WTC11 (cell line): ENCODE measurements at regions of chr3 and their contacts with region 1.

Region 1: DNA sequence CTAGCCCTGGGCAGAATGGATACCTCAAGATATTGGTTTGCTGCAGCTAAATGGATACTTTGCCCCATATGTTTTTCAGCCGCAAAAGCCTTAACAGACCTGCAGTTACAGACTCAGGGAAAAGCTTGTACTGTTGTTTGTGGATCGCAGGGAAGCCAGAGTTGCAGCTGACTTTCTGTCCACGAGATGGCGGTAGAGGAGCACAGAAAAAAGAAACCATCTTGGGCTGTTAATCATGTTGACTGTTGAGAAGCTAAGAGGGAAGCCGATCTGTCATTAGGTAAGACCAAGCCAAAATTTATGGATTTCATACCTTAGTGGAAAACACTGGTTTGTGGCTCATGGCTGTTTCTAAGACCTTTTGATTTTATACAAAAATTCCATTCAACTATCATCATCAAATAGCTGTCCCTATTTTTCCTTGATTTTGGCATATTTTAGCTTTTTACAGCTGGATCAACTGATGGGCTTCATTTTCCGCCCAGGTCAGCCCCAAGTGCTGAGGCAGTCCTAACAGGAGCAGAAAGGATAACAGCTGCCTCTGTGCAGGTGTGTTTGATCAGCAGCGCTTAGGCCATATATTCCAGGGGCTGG is 205.7 kb upstream of the ZPLD1 start:
- DNase-seq: peak; percentile 80
- ATAC-seq: peak; percentile 86
- H3K4me3 Mint-ChIP-seq: no peak overlapping the region
- H3K27ac Mint-ChIP-seq: no peak overlapping the region
- H3K4me1 Mint-ChIP-seq: peaks cover 10% of the 10 kb centered on the region; the same call in 1 of the 2 replicates
- H3K27me3 Mint-ChIP-seq: no peaks in the 10 kb centered on the region
- CTCF ChIP-seq: peak; percentile 72

Region 2: DNA sequence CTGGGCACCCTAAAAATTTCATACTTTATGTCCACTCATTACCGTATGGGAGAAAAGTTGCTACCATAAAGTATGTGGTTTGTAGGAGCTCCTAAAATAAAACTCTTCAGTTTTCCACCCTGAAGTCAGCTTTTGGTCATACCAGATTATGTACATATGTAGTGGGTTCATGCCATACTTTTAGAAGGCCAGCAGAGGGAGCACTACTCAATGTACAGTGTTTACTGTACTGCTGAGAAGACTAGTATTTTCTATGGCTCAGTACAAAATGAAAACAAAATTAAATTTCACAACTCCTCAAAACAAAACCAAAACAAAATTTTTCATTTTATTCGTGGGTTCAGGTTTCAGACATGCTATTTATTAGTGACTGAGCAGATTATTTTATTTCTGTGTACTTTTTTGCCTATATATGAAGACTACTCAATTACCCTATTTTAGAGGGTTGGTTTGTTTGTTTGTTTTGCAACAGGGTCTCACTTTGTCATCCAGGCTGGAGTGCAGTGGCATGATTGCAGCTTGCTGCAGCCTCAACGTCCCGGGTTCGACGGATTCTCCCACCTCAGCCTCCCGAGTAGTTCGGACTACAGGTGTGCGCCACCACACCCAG is 425.9 kb before region 1 on chr3:
- CTCF ChIA-PET with region 1: interaction called, 33 read pairs
- POLR2A ChIA-PET with region 1: interaction called, 3 read pairs
- DNase-seq: no peak
- ATAC-seq: peak; percentile 73
- H3K4me3 Mint-ChIP-seq: no peak overlapping the region
- H3K27ac Mint-ChIP-seq: no peak overlapping the region
- H3K4me1 Mint-ChIP-seq: peaks cover 13% of the 10 kb centered on the region
- H3K27me3 Mint-ChIP-seq: no peaks in the 10 kb centered on the region
- CTCF ChIP-seq: peak; percentile 78

Region 3: DNA sequence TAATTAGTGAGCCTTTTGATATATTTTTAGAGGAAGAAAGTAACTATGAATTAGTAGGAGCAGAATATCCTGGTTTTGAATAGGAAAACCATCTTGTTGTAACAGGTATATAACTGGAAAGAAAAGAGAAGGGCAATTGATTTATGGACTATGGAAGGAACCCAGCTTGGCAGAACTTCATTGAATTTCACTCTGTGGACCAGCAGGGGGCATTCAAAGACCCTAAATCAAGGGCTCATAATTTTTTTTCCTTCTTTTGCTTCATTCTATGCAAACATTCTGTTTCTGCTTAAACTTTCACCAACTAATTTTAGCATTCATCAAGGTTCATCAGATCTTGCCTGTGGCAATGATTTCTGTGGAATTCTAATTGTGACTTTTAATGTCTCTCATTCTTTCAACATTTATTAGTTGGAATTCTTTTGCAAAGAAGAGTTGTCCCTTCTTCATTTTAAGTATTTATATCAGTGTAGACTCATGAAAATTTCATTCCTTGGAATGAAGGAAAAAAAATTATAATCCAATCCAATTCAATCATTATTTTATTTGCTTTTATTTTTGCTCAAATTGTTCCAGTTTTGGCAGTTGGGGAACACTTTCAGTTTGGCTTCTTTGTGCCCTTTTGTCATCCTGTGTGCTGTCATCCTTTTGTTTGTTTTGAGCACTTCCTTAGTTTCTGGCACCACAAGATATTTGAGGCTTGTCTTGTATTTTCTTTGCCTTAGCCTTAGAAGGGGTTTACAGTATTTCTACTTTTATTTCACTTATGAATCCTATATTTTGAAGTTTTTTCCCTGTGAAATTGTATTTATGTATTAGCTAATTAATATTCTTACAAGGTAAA is 419.8 kb before region 1 on chr3:
- CTCF ChIA-PET with region 1: interaction called, 33 read pairs
- POLR2A ChIA-PET with region 1: interaction called, 3 read pairs
- DNase-seq: no peak
- ATAC-seq: no peak
- H3K4me3 Mint-ChIP-seq: no peak overlapping the region
- H3K27ac Mint-ChIP-seq: peak overlapping the region; percentile 36; the same call in 1 of the 2 replicates
- H3K4me1 Mint-ChIP-seq: peaks cover 15% of the 10 kb centered on the region
- H3K27me3 Mint-ChIP-seq: no peaks in the 10 kb centered on the region
- CTCF ChIP-seq: peak; percentile 36; the same call in 1 of the 2 replicates

Region 4: GRCh38 chr3:101827211-101828174 is 401.7 kb before region 1 on chr3:
- CTCF ChIA-PET with region 1: interaction called, 10 read pairs
- POLR2A ChIA-PET with region 1: no interaction called
- DNase-seq: peak; percentile 54
- ATAC-seq: peak; percentile 90
- H3K4me3 Mint-ChIP-seq: peak overlapping the region; percentile 82
- H3K27ac Mint-ChIP-seq: peak overlapping the region; percentile 80
- H3K4me1 Mint-ChIP-seq: peaks cover 23% of the 10 kb centered on the region
- H3K27me3 Mint-ChIP-seq: no peaks in the 10 kb centered on the region
- CTCF ChIP-seq: no peak

Region 5: DNA sequence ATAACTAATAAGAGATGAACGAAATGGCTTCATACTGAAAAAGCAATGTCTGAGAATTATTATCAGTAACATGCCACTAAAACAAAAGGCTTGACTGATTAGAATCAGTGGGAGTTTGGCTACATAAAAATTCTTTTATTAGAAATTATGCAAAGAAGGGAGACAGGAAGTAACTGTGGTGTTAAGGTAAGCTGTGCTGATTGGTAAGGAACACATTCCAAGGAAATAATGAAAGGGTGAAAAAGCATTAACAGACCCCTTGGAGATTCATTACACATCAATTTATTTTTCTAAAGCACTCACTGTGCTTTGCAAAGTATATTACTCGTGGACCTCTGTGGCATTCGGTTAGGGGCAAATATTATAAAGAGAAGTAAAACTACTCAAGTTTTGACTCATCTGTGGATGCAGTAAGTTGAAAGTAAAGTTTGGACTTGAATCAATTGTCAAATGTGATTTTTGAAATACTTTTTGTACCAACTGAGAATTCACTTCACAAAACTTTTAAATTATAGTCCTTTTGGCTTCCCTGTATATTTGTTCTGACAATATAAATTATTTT is 29.6 kb after region 1 on chr3:
- CTCF ChIA-PET with region 1: no interaction called
- POLR2A ChIA-PET with region 1: no interaction called
- DNase-seq: no peak
- ATAC-seq: no peak
- H3K4me3 Mint-ChIP-seq: no peak overlapping the region
- H3K27ac Mint-ChIP-seq: no peak overlapping the region
- H3K4me1 Mint-ChIP-seq: peaks cover 7% of the 10 kb centered on the region
- H3K27me3 Mint-ChIP-seq: no peaks in the 10 kb centered on the region
- CTCF ChIP-seq: no peak

Region 6: DNA sequence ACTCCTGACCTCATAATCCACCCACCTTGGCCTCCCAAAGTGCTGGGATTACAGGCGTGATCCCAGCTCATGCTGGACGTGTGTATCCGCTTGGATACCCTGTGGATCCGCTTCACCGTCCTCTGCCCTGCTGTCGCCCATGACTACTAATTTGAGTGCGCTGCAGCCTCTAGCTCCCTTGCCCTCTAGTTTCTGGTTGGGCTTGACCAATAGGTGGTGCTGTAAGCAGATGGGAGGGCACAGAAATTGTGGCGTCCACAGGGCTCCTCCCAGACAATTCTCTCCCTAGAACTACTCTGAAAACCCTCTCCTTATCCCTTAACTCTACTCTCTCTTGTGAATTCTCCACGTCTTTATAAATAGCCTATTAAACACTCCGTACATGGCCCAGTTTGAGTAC is 241.8 kb after region 1 on chr3:
- CTCF ChIA-PET with region 1: interaction called, 16 read pairs
- POLR2A ChIA-PET with region 1: no interaction called
- DNase-seq: peak; percentile 66
- ATAC-seq: peak; percentile 100
- H3K4me3 Mint-ChIP-seq: no peak overlapping the region
- H3K27ac Mint-ChIP-seq: no peak overlapping the region
- H3K4me1 Mint-ChIP-seq: no peaks in the 10 kb centered on the region
- H3K27me3 Mint-ChIP-seq: no peaks in the 10 kb centered on the region
- CTCF ChIP-seq: peak; percentile 26; the same call in 1 of the 2 replicates

Region 7: GRCh38 chr3:102529452-102529851 is 300.3 kb after region 1 on chr3:
- CTCF ChIA-PET with region 1: interaction called, 41 read pairs
- POLR2A ChIA-PET with region 1: no interaction called
- DNase-seq: peak; percentile 35
- ATAC-seq: peak; percentile 96
- H3K4me3 Mint-ChIP-seq: no peak overlapping the region
- H3K27ac Mint-ChIP-seq: no peak overlapping the region
- H3K4me1 Mint-ChIP-seq: 0 out of 2 replicates have a peak, but pooled peaks cover 3% of the 10 kb centered on the region
- H3K27me3 Mint-ChIP-seq: no peaks in the 10 kb centered on the region
- CTCF ChIP-seq: no peak

Region 8: DNA sequence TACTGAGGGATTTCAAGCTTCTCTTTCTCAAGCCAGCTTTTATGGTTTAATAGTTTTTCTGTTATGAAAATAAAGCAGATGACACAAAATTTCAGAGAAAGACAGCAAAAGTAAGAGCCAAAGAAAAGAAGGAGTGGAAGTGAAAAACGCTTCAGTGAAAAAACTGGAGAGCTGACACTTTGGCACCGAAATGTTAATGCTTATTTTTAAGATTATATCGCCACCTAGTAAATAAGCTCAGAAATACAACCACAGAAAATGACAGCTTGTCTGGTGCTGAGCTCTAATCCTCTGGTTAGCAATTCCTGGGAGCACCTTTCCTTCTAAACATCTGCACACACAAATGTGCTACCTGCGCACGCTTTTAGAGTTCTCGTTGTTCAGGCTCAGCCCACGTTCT is 307.3 kb after region 1 on chr3:
- CTCF ChIA-PET with region 1: interaction called, 95 read pairs
- POLR2A ChIA-PET with region 1: no interaction called
- DNase-seq: no peak
- ATAC-seq: peak; percentile 68
- H3K4me3 Mint-ChIP-seq: no peak overlapping the region
- H3K27ac Mint-ChIP-seq: no peak overlapping the region
- H3K4me1 Mint-ChIP-seq: no peaks in the 10 kb centered on the region
- H3K27me3 Mint-ChIP-seq: no peaks in the 10 kb centered on the region
- CTCF ChIP-seq: peak; percentile 15; the same call in 1 of the 2 replicates